ENCODE measurements at regions of chr1 and their contacts with region 1.

Region 1: DNA sequence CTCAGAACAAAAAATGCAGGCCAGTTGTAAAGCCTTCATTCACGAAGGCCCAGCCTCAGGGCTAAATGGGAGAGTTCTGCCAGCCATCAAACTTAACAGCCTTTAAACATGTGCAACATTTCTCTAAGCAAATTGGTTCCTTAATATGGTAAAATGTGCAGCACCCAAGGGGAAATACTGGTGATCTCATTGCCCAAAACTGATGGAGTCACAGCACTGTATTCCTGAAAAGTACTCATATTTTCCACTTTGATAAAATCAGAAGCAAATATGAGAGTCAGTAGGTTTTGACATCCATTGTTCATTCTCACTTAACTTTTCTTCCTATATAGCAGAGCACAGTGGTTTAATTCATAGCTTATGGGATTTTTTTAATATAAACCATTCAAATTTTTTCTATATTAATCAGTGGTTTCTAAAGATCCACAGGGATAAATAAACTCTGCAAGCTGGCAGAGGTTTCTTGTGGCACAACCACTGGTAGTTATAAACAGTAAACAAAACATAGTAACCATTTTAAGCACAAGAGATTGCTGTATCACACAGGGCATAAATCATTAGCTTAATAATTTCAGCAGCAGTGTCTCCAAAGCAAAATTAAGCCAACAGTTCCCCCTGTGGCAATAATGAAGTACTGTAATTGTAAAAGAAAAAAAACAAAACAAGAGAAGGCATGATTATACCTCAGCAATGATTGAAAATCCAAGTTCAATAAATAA is 106.9 kb upstream of the LYPLAL1 start:
- DNase-seq: peak; percentile 59
- ATAC-seq: peak; percentile 79
- H3K4me3 ChIP-seq: no peak overlapping the region
- H3K27ac ChIP-seq: peak overlapping the region; percentile 26; the same call in 1 of the 2 replicates
- H3K4me1 ChIP-seq: peaks cover 2% of the 10 kb centered on the region
- H3K27me3 ChIP-seq: no peaks in the 10 kb centered on the region
- CTCF ChIP-seq: peak; percentile 74
- POLR2A ChIP-seq: no peak
- RAD21 ChIP-seq: peak; percentile 85

Region 2: GRCh38 chr1:218339267-218339831 is 727.4 kb before region 1 on chr1:
- CTCF ChIA-PET with region 1: interaction called, 4 read pairs
- POLR2A ChIA-PET with region 1: no interaction called
- dilution Hi-C with region 1: no loop called
- in situ Hi-C with region 1: no loop called
- intact Hi-C with region 1: loop called (anchors 2 kb)
- DNase-seq: peak; percentile 62
- ATAC-seq: peak; percentile 70; the same call in 1 of the 2 replicates
- H3K4me3 ChIP-seq: no peak overlapping the region
- H3K27ac ChIP-seq: no peak overlapping the region
- H3K4me1 ChIP-seq: 0 out of 2 replicates have a peak, but pooled peaks cover 2% of the 10 kb centered on the region
- H3K27me3 ChIP-seq: no peaks in the 10 kb centered on the region
- CTCF ChIP-seq: peak; percentile 72
- POLR2A ChIP-seq: no peak
- RAD21 ChIP-seq: peak; percentile 74

Region 3: DNA sequence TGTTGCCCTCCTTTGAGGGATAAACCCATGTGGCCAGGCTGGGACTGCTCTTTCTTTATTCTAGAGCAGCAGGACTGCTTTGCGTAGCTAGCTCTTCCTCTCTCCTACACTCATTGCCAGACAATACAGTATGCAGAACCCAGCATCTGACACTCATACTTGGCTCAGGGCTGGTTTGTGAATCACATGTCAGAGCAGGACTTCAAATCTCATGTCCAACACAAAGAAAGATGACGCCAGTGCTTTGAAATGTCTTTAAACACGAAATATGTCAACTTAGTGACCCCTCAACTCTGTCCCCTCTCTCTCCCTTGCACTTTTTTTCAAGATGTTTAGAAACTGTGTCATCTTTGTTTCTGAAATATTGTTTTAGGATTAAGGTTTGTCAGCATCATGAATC is 586.7 kb before region 1 on chr1:
- CTCF ChIA-PET with region 1: no interaction called
- POLR2A ChIA-PET with region 1: no interaction called
- dilution Hi-C with region 1: no loop called
- in situ Hi-C with region 1: loop called (anchors 10 kb)
- intact Hi-C with region 1: loop called (anchors 5 kb)
- DNase-seq: peak; percentile 97
- ATAC-seq: peak; percentile 64
- H3K4me3 ChIP-seq: no peak overlapping the region
- H3K27ac ChIP-seq: peak overlapping the region; percentile 78
- H3K4me1 ChIP-seq: peaks cover 16% of the 10 kb centered on the region
- H3K27me3 ChIP-seq: no peaks in the 10 kb centered on the region
- CTCF ChIP-seq: no peak
- POLR2A ChIP-seq: peak; percentile 45; the same call in 1 of the 2 replicates
- RAD21 ChIP-seq: no peak

Region 4: GRCh38 chr1:218660678-218661053 is 406.1 kb before region 1 on chr1:
- CTCF ChIA-PET with region 1: no interaction called
- POLR2A ChIA-PET with region 1: no interaction called
- dilution Hi-C with region 1: no loop called
- in situ Hi-C with region 1: no loop called
- intact Hi-C with region 1: loop called (anchors 5 kb)
- DNase-seq: peak; percentile 82
- ATAC-seq: no peak
- H3K4me3 ChIP-seq: no peak overlapping the region
- H3K27ac ChIP-seq: no peak overlapping the region; the same call in 1 of the 2 replicates
- H3K4me1 ChIP-seq: peaks cover 14% of the 10 kb centered on the region
- H3K27me3 ChIP-seq: no peaks in the 10 kb centered on the region
- CTCF ChIP-seq: no peak
- POLR2A ChIP-seq: no peak
- RAD21 ChIP-seq: no peak

Region 5: GRCh38 chr1:218694636-218695035 is 372.2 kb before region 1 on chr1:
- CTCF ChIA-PET with region 1: no interaction called
- POLR2A ChIA-PET with region 1: no interaction called
- dilution Hi-C with region 1: no loop called
- in situ Hi-C with region 1: no loop called
- intact Hi-C with region 1: no loop called
- DNase-seq: no peak
- ATAC-seq: no peak
- H3K4me3 ChIP-seq: no peak overlapping the region
- H3K27ac ChIP-seq: no peak overlapping the region
- H3K4me1 ChIP-seq: 0 out of 2 replicates have a peak, but pooled peaks cover 2% of the 10 kb centered on the region
- H3K27me3 ChIP-seq: no peaks in the 10 kb centered on the region
- CTCF ChIP-seq: no peak
- POLR2A ChIP-seq: no peak
- RAD21 ChIP-seq: no peak

Region 6: DNA sequence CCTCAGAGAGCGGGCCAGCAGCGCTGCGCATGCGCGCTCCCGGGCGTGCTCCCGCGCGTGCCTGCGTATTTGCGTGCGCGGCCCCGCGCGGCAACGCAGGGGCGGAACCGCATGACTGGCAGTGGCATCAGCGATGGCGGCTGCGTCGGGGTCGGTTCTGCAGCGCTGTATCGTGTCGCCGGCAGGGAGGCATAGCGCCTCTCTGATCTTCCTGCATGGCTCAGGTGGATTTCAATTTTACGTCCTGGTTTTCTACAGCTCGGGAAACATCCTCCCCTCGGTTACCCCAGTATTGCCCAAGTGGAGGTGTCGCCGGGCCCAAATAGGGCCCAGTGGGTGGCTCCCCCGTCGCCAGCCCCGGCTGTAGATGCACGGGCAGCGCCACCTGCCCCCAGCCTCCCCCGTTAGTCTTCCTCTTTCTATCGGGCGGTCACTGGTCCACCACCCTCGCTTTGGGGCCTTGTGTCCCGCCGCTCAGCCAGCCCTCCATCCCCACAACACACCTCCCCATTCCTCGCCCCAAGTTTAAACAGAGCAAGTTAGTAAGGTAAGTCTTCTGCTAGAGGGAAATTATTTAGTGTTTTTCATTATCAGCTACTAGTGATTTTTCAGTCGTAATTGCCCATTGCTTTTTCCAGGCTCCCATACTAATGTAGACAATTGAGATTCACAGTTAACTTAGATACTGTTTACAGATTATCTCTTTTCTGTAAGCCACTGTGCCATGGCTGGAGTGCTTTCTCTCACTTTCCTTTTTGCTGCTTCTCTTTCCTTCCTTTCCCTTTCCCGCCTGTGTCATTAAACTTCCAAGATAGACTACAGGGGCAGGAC is 107.2 kb after region 1 on chr1 and contains the start of gene LYPLAL1:
- CTCF ChIA-PET with region 1: no interaction called
- POLR2A ChIA-PET with region 1: no interaction called
- dilution Hi-C with region 1: no loop called
- in situ Hi-C with region 1: no loop called
- intact Hi-C with region 1: loop called (anchors 5 kb)
- DNase-seq: peak; percentile 89
- ATAC-seq: peak; percentile 93
- H3K4me3 ChIP-seq: peak within 1 kb of the TSS; percentile 59
- H3K27ac ChIP-seq: peak within 1 kb of the TSS; percentile 93
- H3K4me1 ChIP-seq: peaks cover 6% of the 10 kb centered on the region
- H3K27me3 ChIP-seq: no peaks in the 10 kb centered on the region
- CTCF ChIP-seq: no peak
- POLR2A ChIP-seq: peak; percentile 75
- RAD21 ChIP-seq: no peak
- total RNA-seq, gene LYPLAL1: 4.8 and 11.4 TPM in 2 replicates